ENCODE measurements at regions of chr19 and their contacts with region 1.

Region 1: GRCh38 chr19:33771384-33772101 is 25.1 kb upstream of the KCTD15 start:
- DNase-seq: peak; percentile 79
- ATAC-seq: peak; percentile 83

Region 2: DNA sequence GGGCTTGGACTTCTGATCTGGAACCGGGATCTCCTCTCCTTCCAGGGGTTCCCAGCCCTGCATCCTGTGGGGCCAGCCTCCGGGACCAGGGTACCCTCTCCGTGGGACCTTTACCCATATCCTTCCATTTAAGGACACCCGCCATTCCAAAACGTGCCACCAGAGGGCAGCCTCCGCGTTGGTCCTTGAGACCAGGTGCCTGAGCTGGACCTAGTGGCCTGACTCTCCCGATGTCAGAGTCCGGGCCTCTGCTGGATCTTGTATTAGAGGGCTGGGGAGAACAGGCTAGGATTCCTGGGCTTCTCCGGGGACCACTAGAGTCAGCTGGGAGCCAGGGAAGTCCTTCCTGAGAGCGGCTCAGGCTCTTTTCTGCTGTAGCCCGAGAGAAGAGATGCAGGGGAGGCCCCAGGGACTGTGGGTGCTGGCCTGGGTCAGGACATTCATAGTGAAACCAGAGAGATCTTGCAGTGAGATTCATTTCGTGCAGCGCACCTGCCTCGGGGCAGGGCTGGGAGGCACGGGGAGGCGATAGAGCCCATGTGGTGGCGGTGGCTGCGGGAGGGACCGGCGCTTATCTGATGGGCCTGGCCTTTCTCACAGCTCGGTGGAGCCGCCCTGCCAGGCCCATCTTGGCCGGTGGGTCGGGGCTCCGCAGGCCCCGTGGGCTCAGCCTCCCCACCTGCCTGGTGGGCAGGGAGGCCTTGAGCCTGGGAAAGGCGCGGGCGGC is 536.1 kb before region 1 on chr19:
- intact Hi-C with region 1: loop called (anchors 10 kb)
- DNase-seq: peak; percentile 89
- ATAC-seq: peak; percentile 89

Region 3: GRCh38 chr19:33430674-33431277 is 340.8 kb before region 1 on chr19:
- intact Hi-C with region 1: loop called (anchors 2 kb)
- DNase-seq: peak; percentile 77
- ATAC-seq: peak; percentile 89